ENCODE measurements at regions of chr19 and their contacts with region 1.

Region 1: GRCh38 chr19:41775360-41775695 is 20.0 kb downstream of the CEACAM6 start:
- DNase-seq: peak; percentile 50 to 99
- H3K4me3 ChIP-seq: peak overlapping the region; percentile 34; the same call in 1 of the 2 replicates
- H3K27ac ChIP-seq: peak overlapping the region; percentile 100
- H3K4me1 ChIP-seq: peaks cover 91% of the 10 kb centered on the region
- H3K27me3 ChIP-seq: no peaks in the 10 kb centered on the region
- CTCF ChIP-seq: no peak

Region 2: GRCh38 chr19:41671491-41671890 is 103.8 kb before region 1 on chr19:
- CTCF ChIA-PET with region 1: no interaction called
- POLR2A ChIA-PET with region 1: no interaction called
- intact Hi-C with region 1: no loop called
- DNase-seq: no peak
- H3K4me3 ChIP-seq: no peak overlapping the region
- H3K27ac ChIP-seq: no peak overlapping the region
- H3K4me1 ChIP-seq: no peaks in the 10 kb centered on the region
- H3K27me3 ChIP-seq: peaks cover 55% of the 10 kb centered on the region
- CTCF ChIP-seq: no peak

Region 3: DNA sequence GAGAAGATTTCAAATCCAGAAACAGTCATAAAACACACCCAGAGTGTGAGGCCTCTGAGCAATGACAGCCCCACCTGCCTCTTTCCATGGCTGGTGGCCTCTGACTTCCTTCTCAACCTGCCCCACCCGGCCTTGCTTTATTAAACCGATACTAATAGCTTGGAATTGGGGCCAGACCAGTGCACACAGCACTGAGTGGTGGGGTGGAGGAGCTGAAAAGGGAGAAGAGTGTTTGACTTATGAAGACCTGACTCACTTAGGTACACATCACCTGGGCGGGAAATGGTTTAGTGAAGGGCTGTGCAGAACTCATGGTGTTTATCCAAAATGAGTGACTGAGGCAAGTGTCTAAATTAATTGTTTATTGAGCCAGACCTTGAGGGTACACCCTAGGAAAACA is 40.7 kb before region 1 on chr19:
- CTCF ChIA-PET with region 1: interaction called, 3 read pairs
- POLR2A ChIA-PET with region 1: interaction called, 27 read pairs
- intact Hi-C with region 1: no loop called
- DNase-seq: peak; percentile 55 to 98
- H3K4me3 ChIP-seq: peak overlapping the region; percentile 17; the same call in 1 of the 2 replicates
- H3K27ac ChIP-seq: peak overlapping the region; percentile 100
- H3K4me1 ChIP-seq: peaks cover 92% of the 10 kb centered on the region
- H3K27me3 ChIP-seq: no peaks in the 10 kb centered on the region
- CTCF ChIP-seq: no peak

Region 4: GRCh38 chr19:41740415-41741243 is 34.7 kb before region 1 on chr19:
- CTCF ChIA-PET with region 1: interaction called, 3 read pairs
- POLR2A ChIA-PET with region 1: interaction called, 27 read pairs
- intact Hi-C with region 1: loop called (anchors 1 kb)
- DNase-seq: peak in 1 of 2 experiments; percentile 95
- H3K4me3 ChIP-seq: no peak overlapping the region
- H3K27ac ChIP-seq: peak overlapping the region; percentile 100
- H3K4me1 ChIP-seq: peaks cover 93% of the 10 kb centered on the region
- H3K27me3 ChIP-seq: no peaks in the 10 kb centered on the region
- CTCF ChIP-seq: no peak

Region 5: DNA sequence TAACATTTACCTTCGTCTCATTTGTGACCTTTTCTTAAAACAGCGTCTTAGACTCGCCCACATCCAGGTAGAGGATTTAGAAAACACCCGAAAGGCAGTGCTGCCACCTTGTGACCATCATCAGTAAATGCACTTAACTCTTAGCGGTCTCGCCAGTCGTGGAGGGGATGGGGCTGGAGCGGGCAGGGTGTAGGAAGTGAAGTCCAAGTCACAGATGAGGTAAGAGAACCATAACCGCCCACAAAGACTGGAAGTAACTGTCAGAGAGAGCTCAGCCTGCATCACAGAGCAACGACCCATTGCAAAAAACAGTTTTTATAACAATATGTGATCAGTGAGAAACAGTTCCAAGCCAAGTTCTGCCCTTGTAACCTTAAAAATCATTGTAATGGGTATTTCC is 10.3 kb after region 1 on chr19:
- CTCF ChIA-PET with region 1: interaction called, 4 read pairs
- POLR2A ChIA-PET with region 1: interaction called, 25 read pairs
- intact Hi-C with region 1: loop called (anchors 1 kb)
- DNase-seq: peak; percentile 77 to 79
- H3K4me3 ChIP-seq: no peak overlapping the region
- H3K27ac ChIP-seq: peak overlapping the region; percentile 51
- H3K4me1 ChIP-seq: peaks cover 56% of the 10 kb centered on the region
- H3K27me3 ChIP-seq: no peaks in the 10 kb centered on the region
- CTCF ChIP-seq: peak; percentile 92

Measured in PC-9 (cell line).